Activated B cell treated with CpG ODN at 0.5 μM for 24 hours (primary cell): ENCODE measurements at regions of chr4 and their contacts with region 1.

Region 1: GRCh38 chr4:76213415-76214176 is at the start of gene SCARB2:
- DNase-seq: peak; percentile 83
- ATAC-seq: peak; percentile 80
- H3K4me3 Mint-ChIP-seq: peak within 1 kb of the TSS; percentile 91
- H3K27ac Mint-ChIP-seq: peak within 1 kb of the TSS; percentile 90
- H3K4me1 Mint-ChIP-seq: peaks cover 51% of the 10 kb centered on the region
- H3K27me3 Mint-ChIP-seq: no peaks in the 10 kb centered on the region
- CTCF ChIP-seq: no peak
- total RNA-seq, gene SCARB2: 17.2 and 21.8 TPM in 2 replicates

Region 2: GRCh38 chr4:75189711-75190335 is 1023.8 kb before region 1 on chr4:
- CTCF ChIA-PET with region 1: no interaction called
- POLR2A ChIA-PET with region 1: no interaction called
- intact Hi-C with region 1: no loop called
- DNase-seq: no peak
- ATAC-seq: no peak
- H3K4me3 Mint-ChIP-seq: no peak overlapping the region
- H3K27ac Mint-ChIP-seq: no peak overlapping the region
- H3K4me1 Mint-ChIP-seq: no peaks in the 10 kb centered on the region
- H3K27me3 Mint-ChIP-seq: peaks cover 6% of the 10 kb centered on the region
- CTCF ChIP-seq: no peak

Region 3: GRCh38 chr4:75514131-75514948 is 699.3 kb before region 1 on chr4 and contains the starts of genes RCHY1 and THAP6:
- CTCF ChIA-PET with region 1: no interaction called
- POLR2A ChIA-PET with region 1: no interaction called
- intact Hi-C with region 1: loop called (anchors 10 kb)
- DNase-seq: peak; percentile 88
- ATAC-seq: peak; percentile 87
- H3K4me3 Mint-ChIP-seq: no peak within 1 kb of the TSS
- H3K27ac Mint-ChIP-seq: peak within 1 kb of the TSS; percentile 95
- H3K4me1 Mint-ChIP-seq: peaks cover 39% of the 10 kb centered on the region
- H3K27me3 Mint-ChIP-seq: no peaks in the 10 kb centered on the region
- CTCF ChIP-seq: no peak
- total RNA-seq, gene RCHY1: 28.5 and 29.6 TPM in 2 replicates
- total RNA-seq, gene THAP6: 17.4 and 24.6 TPM in 2 replicates

Region 4: DNA sequence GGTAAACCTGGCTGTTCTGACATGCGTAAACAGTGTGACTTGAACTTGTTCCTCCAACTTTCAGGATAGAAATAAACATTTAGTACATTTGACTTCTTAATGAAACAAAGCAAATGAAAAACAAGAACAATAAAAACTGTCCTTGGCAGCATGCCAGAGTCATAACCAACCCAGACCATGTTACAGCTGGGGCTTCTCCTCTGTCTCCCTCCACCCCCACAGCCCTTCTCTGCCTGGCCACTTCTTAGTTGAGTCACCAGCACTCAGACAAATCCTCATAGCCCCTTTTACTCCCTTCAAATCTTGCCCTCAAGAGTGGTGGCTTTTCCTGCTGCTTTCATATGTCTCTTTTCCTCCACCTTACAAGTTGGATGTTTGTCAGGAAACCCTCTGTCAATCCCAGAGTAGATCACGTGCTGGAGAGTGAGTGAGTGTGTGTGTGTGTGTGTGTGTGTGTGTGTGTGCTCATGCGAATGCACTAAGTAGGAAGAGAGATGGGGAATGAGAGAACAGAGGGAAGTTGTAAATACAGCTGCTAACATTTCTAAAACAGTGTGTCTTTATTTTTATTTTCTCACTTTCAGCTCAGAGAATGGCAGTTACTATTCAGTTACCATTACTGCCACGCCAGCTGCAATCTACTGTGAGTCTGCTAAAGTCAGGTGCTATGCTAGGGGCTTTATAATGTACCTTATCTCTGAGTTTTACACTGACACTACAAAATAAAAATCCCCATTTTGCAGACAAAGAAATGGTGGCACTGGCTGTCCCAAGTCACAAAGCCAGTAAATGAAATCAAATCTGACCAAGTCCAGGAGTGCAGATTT is 15.0 kb before region 1 on chr4:
- CTCF ChIA-PET with region 1: interaction called, 10 read pairs
- POLR2A ChIA-PET with region 1: interaction called, 25 read pairs
- intact Hi-C with region 1: loop called (anchors 1 kb)
- DNase-seq: no peak
- ATAC-seq: no peak
- H3K4me3 Mint-ChIP-seq: peak overlapping the region; percentile 1
- H3K27ac Mint-ChIP-seq: peak overlapping the region; percentile 51
- H3K4me1 Mint-ChIP-seq: peaks cover 58% of the 10 kb centered on the region
- H3K27me3 Mint-ChIP-seq: no peaks in the 10 kb centered on the region
- CTCF ChIP-seq: no peak

Region 5: DNA sequence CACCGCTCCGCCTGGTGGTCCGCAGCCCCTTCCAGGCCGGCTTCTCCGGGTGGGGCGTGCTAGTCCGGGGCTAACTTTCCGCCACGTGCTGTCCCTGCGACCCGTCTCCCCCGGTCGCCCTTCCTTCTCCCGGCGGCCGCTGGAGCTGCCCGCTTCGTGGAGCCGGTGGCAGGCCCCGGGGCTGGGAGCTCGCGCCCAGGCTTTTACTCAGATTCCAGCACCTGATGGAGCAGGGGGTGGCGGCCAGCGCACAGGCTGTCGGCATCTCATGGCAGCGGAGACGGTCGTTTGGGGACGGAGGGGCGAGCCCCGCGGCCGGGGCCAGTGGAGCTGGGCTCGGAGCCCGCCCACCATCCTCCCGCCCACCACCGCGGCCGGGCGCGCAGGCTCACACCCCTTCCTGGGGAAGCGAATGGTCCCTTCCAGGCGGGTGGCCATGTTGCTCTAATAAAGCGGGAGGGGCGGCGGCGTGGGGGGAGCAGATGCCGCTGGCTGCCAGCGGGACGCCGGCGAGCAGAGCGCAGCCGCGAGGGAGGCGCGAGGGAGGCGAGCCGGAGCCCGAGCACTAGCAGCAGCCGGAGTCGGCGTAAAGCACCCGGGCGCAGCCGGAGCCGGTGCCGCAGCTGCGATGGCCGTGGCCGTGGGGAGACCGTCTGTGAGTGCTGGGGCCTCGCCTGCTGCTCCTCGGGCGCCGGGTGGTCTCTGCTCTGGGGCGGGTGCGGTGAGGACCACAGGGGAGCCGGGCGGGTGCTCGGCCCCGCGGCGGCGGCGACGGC is 735.9 kb after region 1 on chr4 and contains the start of gene SEPTIN11:
- CTCF ChIA-PET with region 1: no interaction called
- POLR2A ChIA-PET with region 1: no interaction called
- intact Hi-C with region 1: loop called (anchors 5 kb)
- DNase-seq: peak; percentile 77
- ATAC-seq: peak; percentile 76
- H3K4me3 Mint-ChIP-seq: peak within 1 kb of the TSS; percentile 90
- H3K27ac Mint-ChIP-seq: peak within 1 kb of the TSS; percentile 68
- H3K4me1 Mint-ChIP-seq: peaks cover 15% of the 10 kb centered on the region
- H3K27me3 Mint-ChIP-seq: no peaks in the 10 kb centered on the region
- CTCF ChIP-seq: no peak
- total RNA-seq, gene SEPTIN11: 22.3 and 22.4 TPM in 2 replicates

Region 6: DNA sequence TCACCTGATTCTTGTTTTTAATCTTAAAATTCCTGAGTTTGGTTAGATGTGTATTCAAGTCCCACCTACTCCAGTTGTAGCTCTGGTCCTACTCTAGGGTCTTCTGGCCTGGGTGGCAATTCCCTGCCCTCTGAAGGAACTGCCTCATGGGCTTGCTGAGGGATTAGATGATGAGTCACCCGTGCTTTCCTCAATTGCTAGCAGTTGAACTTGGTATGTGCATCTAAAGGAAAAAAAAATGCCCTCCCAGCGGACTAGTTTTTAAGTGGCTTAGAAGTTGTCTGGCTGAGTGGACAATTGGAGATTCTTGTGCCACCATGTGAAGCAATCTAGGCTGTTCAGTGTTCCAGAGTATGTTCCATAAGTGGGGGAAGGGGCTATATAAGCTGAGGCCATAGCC is 1070.4 kb after region 1 on chr4:
- CTCF ChIA-PET with region 1: no interaction called
- POLR2A ChIA-PET with region 1: no interaction called
- intact Hi-C with region 1: no loop called
- DNase-seq: no peak
- ATAC-seq: no peak
- H3K4me3 Mint-ChIP-seq: no peak overlapping the region
- H3K27ac Mint-ChIP-seq: no peak overlapping the region
- H3K4me1 Mint-ChIP-seq: no peaks in the 10 kb centered on the region
- H3K27me3 Mint-ChIP-seq: no peaks in the 10 kb centered on the region
- CTCF ChIP-seq: no peak